ENCODE measurements at regions of chr21 and their contacts with region 1.

Region 1: DNA sequence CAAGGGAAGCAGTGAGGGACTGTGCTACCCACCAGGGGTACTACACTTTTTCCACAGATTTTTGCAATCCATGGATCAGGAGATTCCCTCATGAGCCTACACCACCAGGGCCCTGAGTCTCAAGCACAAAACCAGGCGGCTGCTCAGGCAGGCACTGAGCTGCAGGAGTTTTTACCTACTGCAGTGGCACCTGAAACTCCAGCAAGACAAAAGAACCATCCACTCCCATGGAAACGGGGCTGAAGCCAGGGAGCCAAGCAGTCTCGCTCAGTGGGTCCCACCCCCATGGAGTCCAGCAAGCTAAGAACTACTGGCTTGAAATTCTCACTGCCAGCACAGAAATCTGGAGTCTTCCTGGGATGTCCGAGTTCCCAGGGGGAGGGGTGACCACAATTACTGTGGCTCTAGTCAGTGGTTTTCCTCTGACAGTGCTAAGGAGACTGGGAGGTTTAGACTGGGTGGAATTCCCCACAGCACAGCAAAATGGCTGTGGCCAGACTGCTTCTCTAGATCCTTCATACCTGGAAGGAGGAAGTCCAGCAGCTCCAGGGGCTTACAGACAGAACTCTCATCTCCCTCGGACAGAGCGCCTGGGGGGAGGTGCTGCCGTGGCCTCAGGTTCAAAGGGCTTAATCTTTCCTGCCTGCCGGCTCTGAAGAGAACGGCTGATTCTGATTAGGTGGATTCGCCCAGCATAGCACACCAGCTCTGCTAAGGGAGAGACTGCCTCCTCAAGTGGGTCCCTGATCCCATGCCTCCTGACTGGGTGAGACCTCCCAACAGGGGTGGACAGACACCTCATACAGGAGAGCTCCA is 437.8 kb downstream of the LTN1 start:
- DNase-seq: no peak
- ATAC-seq: peak in 1 of 4 experiments; percentile 13
- H3K4me3 ChIP-seq: no peak overlapping the region
- H3K4me3 Mint-ChIP-seq: no peak overlapping the region
- H3K27ac ChIP-seq: no peak overlapping the region
- H3K27ac Mint-ChIP-seq: no peak overlapping the region
- H3K4me1 ChIP-seq: no peaks in the 10 kb centered on the region
- H3K4me1 Mint-ChIP-seq: peaks cover 0 to under 1% (median 0%) of the 10 kb centered on the region in 3 donors
- H3K27me3 ChIP-seq: no peaks in the 10 kb centered on the region
- H3K27me3 Mint-ChIP-seq: no peaks in the 10 kb centered on the region

Region 2: DNA sequence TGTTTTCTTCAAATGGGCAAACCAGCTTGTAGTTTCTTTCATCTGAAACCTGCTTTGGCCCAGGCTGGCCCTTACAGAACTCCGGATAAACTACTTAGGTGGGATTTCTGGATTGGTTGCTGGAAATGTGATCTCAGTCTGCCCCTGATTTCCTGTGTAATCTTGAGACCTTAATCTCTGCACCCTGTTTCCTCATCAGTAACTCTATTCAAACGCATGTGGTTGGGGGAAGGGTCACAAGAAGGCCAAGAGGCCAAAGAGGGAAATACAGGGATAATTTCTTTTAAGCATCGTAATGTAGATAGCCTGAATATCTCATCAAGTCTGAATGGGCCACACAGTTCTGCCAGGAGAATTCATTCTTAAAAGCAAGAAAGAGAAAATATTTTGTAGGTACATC is 45.8 kb before region 1 on chr21:
- CTCF ChIA-PET with region 1: no interaction called
- POLR2A ChIA-PET with region 1: no interaction called
- DNase-seq: no peak
- ATAC-seq: no peak
- H3K4me3 ChIP-seq: no peak overlapping the region
- H3K4me3 Mint-ChIP-seq: no peak overlapping the region
- H3K27ac ChIP-seq: no peak overlapping the region
- H3K27ac Mint-ChIP-seq: no peak overlapping the region
- H3K4me1 ChIP-seq: no peaks in the 10 kb centered on the region
- H3K4me1 Mint-ChIP-seq: no peaks in the 10 kb centered on the region
- H3K27me3 ChIP-seq: no peaks in the 10 kb centered on the region
- H3K27me3 Mint-ChIP-seq: peaks cover 6 to 11% of the 10 kb centered on the region in 2 donors

Region 3: GRCh38 chr21:28568692-28569091 is 13.8 kb after region 1 on chr21:
- CTCF ChIA-PET with region 1: no interaction called
- POLR2A ChIA-PET with region 1: no interaction called
- DNase-seq: no peak
- ATAC-seq: no peak
- H3K4me3 ChIP-seq: no peak overlapping the region
- H3K4me3 Mint-ChIP-seq: no peak overlapping the region
- H3K27ac ChIP-seq: no peak overlapping the region
- H3K27ac Mint-ChIP-seq: no peak overlapping the region
- H3K4me1 ChIP-seq: no peaks in the 10 kb centered on the region
- H3K4me1 Mint-ChIP-seq: no peaks in the 10 kb centered on the region
- H3K27me3 ChIP-seq: no peaks in the 10 kb centered on the region
- H3K27me3 Mint-ChIP-seq: no peaks in the 10 kb centered on the region

Region 4: DNA sequence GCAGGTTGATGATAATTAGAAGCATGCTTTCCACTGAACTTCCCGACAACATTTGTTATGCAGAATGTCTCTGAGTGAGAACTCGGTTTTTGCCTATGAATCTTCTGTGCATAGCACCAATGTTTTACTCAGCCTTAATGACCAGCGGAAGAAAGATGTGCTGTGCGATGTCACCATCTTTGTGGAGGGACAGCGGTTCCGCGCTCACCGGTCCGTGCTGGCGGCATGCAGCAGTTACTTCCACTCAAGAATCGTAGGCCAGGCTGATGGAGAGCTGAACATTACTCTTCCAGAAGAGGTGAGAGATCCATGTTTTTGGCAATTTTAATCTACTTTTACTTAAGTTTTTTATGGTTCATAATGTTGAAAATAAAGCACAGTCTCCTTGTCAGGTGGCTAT is 766.3 kb after region 1 on chr21:
- CTCF ChIA-PET with region 1: interaction called in 1 of 2 experiments, 10 read pairs
- POLR2A ChIA-PET with region 1: no interaction called
- DNase-seq: no peak
- ATAC-seq: no peak
- H3K4me3 ChIP-seq: no peak overlapping the region
- H3K4me3 Mint-ChIP-seq: no peak overlapping the region
- H3K27ac ChIP-seq: no peak overlapping the region
- H3K27ac Mint-ChIP-seq: no peak overlapping the region
- H3K4me1 ChIP-seq: no peaks in the 10 kb centered on the region
- H3K4me1 Mint-ChIP-seq: peaks cover 32 to 45% (median 36%) of the 10 kb centered on the region in 3 donors
- H3K27me3 ChIP-seq: no peaks in the 10 kb centered on the region
- H3K27me3 Mint-ChIP-seq: no peaks in the 10 kb centered on the region